ENCODE measurements at regions of chr18 and their contacts with region 1.

Region 1: GRCh38 chr18:77006305-77007175 is 126.0 kb downstream of the MBP start:
- DNase-seq: no peak
- ATAC-seq: no peak
- H3K4me3 ChIP-seq: no peak overlapping the region
- H3K4me3 Mint-ChIP-seq: no peak overlapping the region
- H3K27ac ChIP-seq: no peak overlapping the region
- H3K27ac Mint-ChIP-seq: no peak overlapping the region
- H3K4me1 ChIP-seq: peaks cover 32% of the 10 kb centered on the region
- H3K4me1 Mint-ChIP-seq: peaks cover 24% of the 10 kb centered on the region
- H3K27me3 ChIP-seq: no peaks in the 10 kb centered on the region
- H3K27me3 Mint-ChIP-seq: no peaks in the 10 kb centered on the region
- CTCF ChIP-seq: no peak

Region 2: GRCh38 chr18:76988031-76988826 is 18.3 kb before region 1 on chr18:
- CTCF ChIA-PET with region 1: no interaction called
- POLR2A ChIA-PET with region 1: no interaction called
- intact Hi-C with region 1: no loop called
- DNase-seq: no peak
- ATAC-seq: no peak
- H3K4me3 ChIP-seq: no peak overlapping the region
- H3K4me3 Mint-ChIP-seq: no peak overlapping the region
- H3K27ac ChIP-seq: no peak overlapping the region
- H3K27ac Mint-ChIP-seq: no peak overlapping the region
- H3K4me1 ChIP-seq: peaks cover 5% of the 10 kb centered on the region
- H3K4me1 Mint-ChIP-seq: no peaks in the 10 kb centered on the region
- H3K27me3 ChIP-seq: no peaks in the 10 kb centered on the region
- H3K27me3 Mint-ChIP-seq: no peaks in the 10 kb centered on the region
- CTCF ChIP-seq: no peak

Region 3: GRCh38 chr18:77023102-77023782 is 16.7 kb after region 1 on chr18:
- CTCF ChIA-PET with region 1: no interaction called
- POLR2A ChIA-PET with region 1: no interaction called
- intact Hi-C with region 1: loop called in 1 of 2 experiments (anchors 2 kb)
- DNase-seq: no peak
- ATAC-seq: no peak
- H3K4me3 ChIP-seq: no peak overlapping the region
- H3K4me3 Mint-ChIP-seq: no peak overlapping the region
- H3K27ac ChIP-seq: no peak overlapping the region
- H3K27ac Mint-ChIP-seq: peak overlapping the region; percentile 8
- H3K4me1 ChIP-seq: peaks cover 12% of the 10 kb centered on the region
- H3K4me1 Mint-ChIP-seq: peaks cover 18% of the 10 kb centered on the region
- H3K27me3 ChIP-seq: no peaks in the 10 kb centered on the region
- H3K27me3 Mint-ChIP-seq: no peaks in the 10 kb centered on the region
- CTCF ChIP-seq: no peak

Region 4: DNA sequence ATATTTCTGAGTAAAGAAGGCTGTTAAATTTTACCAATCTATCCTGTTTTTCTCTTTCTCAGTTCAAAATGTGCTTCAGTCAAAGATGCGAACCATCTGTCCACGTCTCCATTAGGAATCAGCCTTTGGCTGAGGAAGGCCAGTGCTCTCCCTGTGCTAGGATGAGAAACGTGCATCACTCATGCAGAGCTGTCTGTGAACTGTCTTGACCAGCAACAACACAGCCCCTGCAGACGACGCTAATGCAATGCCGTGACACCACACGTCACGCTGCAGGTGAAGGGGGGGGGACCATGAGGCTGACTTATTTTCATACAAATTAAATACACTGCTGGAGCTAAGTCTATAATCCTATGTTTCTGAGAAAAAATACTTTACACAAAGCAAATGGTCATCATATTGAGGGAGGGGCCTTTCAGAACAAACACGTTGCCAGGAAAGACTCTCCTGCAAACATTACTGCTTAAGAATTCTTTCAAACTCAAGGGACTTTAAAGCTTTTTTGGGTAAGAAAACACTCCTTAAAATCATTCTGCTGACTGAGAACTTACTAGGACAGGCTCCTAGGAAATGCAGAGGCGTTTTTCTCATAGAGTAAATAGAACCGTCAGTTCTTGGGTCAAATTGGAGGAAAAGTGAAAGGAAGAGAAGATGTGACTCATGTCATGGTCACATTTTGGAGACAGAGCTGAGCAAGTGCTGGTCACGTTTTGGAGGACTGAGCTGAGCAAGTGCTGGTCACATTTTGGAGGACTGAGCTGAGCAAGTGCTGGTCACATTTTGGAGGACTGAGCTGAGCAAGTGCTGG is 29.0 kb after region 1 on chr18:
- CTCF ChIA-PET with region 1: no interaction called
- POLR2A ChIA-PET with region 1: no interaction called
- intact Hi-C with region 1: loop called in 1 of 2 experiments (anchors 2 kb)
- DNase-seq: no peak
- ATAC-seq: no peak
- H3K4me3 ChIP-seq: no peak overlapping the region
- H3K4me3 Mint-ChIP-seq: no peak overlapping the region
- H3K27ac ChIP-seq: no peak overlapping the region
- H3K27ac Mint-ChIP-seq: peak overlapping the region; percentile 11
- H3K4me1 ChIP-seq: peaks cover 39% of the 10 kb centered on the region
- H3K4me1 Mint-ChIP-seq: peaks cover 36% of the 10 kb centered on the region
- H3K27me3 ChIP-seq: no peaks in the 10 kb centered on the region
- H3K27me3 Mint-ChIP-seq: no peaks in the 10 kb centered on the region
- CTCF ChIP-seq: no peak